ENCODE measurements at regions of chrX and their contacts with region 1.

Region 1: DNA sequence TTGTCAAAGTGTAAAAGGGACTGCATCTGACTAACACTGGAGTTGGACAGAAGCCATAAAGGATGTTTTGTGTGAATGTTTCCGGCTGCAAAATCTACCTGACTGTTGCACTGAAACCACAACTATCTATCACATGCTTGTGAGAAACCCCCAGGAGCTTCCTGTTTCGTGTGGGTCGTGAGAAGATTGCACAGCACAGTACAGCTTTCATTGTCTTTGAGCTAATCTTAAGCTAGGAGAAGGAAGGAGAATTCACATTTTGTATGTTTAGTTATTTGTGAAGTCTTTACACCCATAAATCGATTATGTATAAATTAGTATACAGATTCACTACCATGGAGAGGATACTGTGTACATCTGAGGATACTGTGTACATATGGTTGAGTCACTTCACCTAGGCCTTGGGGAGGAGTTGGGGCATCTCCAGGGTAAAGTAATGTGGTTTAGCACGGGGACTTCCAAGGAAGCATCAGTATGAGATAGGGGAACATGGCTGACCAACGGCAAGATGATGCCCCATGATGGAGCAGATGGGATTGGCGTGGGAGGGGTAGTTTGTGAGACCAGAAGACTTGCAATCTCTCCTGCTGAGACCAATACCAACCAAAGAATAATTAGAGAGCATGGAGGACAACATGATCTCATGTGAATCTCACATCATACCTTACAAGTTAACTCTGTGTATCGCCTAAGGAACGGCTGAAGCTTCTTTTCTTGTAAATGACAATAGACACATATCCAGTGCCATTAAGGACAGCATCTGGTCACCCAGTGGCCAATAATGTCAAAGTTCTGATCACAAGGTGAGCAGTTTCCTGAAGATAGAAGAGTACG is 43.1 kb upstream of the FAM9C start:
- DNase-seq: peak; percentile 89
- ATAC-seq: peak; percentile 73
- H3K4me3 ChIP-seq: peak overlapping the region in 1 of 5 experiments; percentile 44
- H3K4me3 Mint-ChIP-seq: peak overlapping the region; percentile 55
- H3K27ac ChIP-seq: peak overlapping the region; percentile 98
- H3K27ac Mint-ChIP-seq: peak overlapping the region; percentile 99
- H3K4me1 ChIP-seq: peaks cover 90 to 91% of the 10 kb centered on the region in 2 donors
- H3K4me1 Mint-ChIP-seq: peaks cover 86% of the 10 kb centered on the region
- H3K27me3 ChIP-seq: no peaks in the 10 kb centered on the region
- H3K27me3 Mint-ChIP-seq: no peaks in the 10 kb centered on the region
- CTCF ChIP-seq: no peak

Region 2: DNA sequence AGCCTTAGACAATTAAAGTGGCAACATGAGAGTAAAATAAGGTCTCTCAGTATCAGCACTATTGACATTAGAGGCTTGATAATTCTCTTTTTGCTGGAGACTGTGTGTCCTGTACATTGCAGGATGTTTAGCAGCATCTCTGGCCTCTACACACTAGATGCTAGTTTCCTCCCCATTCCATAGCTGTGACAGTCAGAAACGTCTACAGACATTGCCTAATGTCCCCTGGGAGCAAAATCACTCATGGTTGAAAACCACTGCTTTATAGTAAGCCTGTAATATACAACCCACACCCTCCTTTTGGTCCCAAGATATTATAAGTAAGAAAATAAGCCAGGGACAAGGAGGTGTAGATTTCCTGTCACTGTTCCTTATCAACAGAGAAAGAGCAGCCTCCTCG is 783.3 kb before region 1 on chrX:
- CTCF ChIA-PET with region 1: no interaction called
- POLR2A ChIA-PET with region 1: no interaction called
- intact Hi-C with region 1: no loop called
- DNase-seq: no peak
- ATAC-seq: no peak
- H3K4me3 ChIP-seq: no peak overlapping the region
- H3K4me3 Mint-ChIP-seq: no peak overlapping the region
- H3K27ac ChIP-seq: no peak overlapping the region
- H3K27ac Mint-ChIP-seq: no peak overlapping the region
- H3K4me1 ChIP-seq: peaks cover 0 to 5% of the 10 kb centered on the region in 2 donors
- H3K4me1 Mint-ChIP-seq: peaks cover 6% of the 10 kb centered on the region
- H3K27me3 ChIP-seq: no peaks in the 10 kb centered on the region
- H3K27me3 Mint-ChIP-seq: no peaks in the 10 kb centered on the region
- CTCF ChIP-seq: no peak

Region 3: GRCh38 chrX:12955882-12956703 is 131.4 kb before region 1 on chrX:
- CTCF ChIA-PET with region 1: interaction called, 173 read pairs
- POLR2A ChIA-PET with region 1: interaction called, 25 read pairs
- intact Hi-C with region 1: loop called (anchors 1 kb)
- DNase-seq: peak; percentile 78
- ATAC-seq: peak; percentile 46
- H3K4me3 ChIP-seq: peak overlapping the region; percentile 33 to 52 (median 38)
- H3K4me3 Mint-ChIP-seq: peak overlapping the region; percentile 90
- H3K27ac ChIP-seq: peak overlapping the region; percentile 95
- H3K27ac Mint-ChIP-seq: peak overlapping the region; percentile 98
- H3K4me1 ChIP-seq: peaks cover 84 to 91% of the 10 kb centered on the region in 2 donors
- H3K4me1 Mint-ChIP-seq: peaks cover 70% of the 10 kb centered on the region
- H3K27me3 ChIP-seq: no peaks in the 10 kb centered on the region
- H3K27me3 Mint-ChIP-seq: no peaks in the 10 kb centered on the region
- CTCF ChIP-seq: no peak

Region 4: DNA sequence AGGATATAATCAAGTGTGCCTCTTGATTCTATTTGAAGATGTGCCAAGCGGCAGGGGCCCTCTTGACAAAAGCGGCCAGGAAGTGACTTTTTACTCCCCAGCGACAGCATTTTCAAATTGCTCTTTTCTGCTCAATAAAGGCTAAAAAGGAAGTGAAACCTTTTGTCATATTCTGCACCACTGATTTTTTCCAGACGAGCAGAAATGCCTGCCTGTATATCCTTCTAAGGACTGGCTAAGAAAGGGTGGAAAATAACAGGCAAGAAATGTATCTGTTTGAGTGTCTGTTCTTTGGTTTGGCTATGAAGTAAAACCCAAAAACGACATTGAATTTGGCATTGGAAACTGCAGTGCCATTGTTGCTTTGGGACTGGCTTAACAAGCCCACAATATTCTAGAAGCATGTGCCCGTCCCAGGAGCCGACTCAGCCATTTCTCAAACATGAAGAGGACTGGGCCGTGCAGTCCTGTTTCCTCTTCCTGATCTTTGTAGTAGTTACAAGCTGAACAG is 87.2 kb before region 1 on chrX:
- CTCF ChIA-PET with region 1: interaction called, 21 read pairs
- POLR2A ChIA-PET with region 1: interaction called, 13 read pairs
- intact Hi-C with region 1: loop called (anchors 1 kb)
- DNase-seq: peak; percentile 79
- ATAC-seq: peak; percentile 72
- H3K4me3 ChIP-seq: peak overlapping the region in 4 of 5 experiments; percentile 3 to 40 (median 10)
- H3K4me3 Mint-ChIP-seq: peak overlapping the region; percentile 84
- H3K27ac ChIP-seq: peak overlapping the region; percentile 76 to 80
- H3K27ac Mint-ChIP-seq: peak overlapping the region; percentile 95
- H3K4me1 ChIP-seq: peaks cover 64 to 69% of the 10 kb centered on the region in 2 donors
- H3K4me1 Mint-ChIP-seq: peaks cover 64% of the 10 kb centered on the region
- H3K27me3 ChIP-seq: no peaks in the 10 kb centered on the region
- H3K27me3 Mint-ChIP-seq: no peaks in the 10 kb centered on the region
- CTCF ChIP-seq: no peak

Region 5: DNA sequence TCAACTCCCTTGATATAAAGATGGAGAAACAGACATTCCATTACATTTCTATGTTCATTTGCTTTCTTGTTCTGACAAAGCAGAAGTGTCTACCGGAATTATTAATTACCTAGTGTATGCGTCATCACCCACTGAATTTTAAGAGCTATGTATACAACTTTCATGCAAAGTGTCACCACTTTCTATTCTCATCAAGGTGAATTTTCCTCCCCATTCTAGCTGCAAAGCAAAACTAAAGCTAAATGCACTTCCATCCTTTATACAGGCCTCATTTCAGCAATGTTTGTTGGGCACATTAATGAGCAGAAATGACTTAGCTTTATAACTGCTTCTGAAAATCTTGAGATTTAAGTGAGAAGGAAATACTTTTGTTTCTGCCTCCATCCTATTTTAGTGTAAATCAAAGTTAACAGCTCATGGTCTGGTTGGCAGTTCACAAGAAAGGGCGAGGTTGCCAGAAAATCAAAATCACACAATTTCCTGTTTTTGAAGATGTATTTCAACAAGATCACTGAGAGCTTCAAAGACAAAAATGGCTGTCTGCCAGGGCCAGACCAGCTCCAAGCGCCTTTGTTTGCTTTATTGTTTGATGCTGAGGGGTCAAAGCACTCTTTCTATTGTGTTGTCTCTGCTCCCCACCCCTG is 35.9 kb before region 1 on chrX:
- CTCF ChIA-PET with region 1: interaction called, 8 read pairs
- POLR2A ChIA-PET with region 1: interaction called, 5 read pairs
- intact Hi-C with region 1: loop called (anchors 5 kb)
- DNase-seq: peak; percentile 69
- ATAC-seq: peak; percentile 76
- H3K4me3 ChIP-seq: no peak overlapping the region
- H3K4me3 Mint-ChIP-seq: peak overlapping the region; percentile 45
- H3K27ac ChIP-seq: peak overlapping the region; percentile 79 to 85
- H3K27ac Mint-ChIP-seq: peak overlapping the region; percentile 93
- H3K4me1 ChIP-seq: peaks cover 35 to 42% of the 10 kb centered on the region in 2 donors
- H3K4me1 Mint-ChIP-seq: peaks cover 51% of the 10 kb centered on the region
- H3K27me3 ChIP-seq: no peaks in the 10 kb centered on the region
- H3K27me3 Mint-ChIP-seq: no peaks in the 10 kb centered on the region
- CTCF ChIP-seq: no peak

Region 6: GRCh38 chrX:13263560-13264251 is 176.2 kb after region 1 on chrX:
- CTCF ChIA-PET with region 1: no interaction called
- POLR2A ChIA-PET with region 1: no interaction called
- intact Hi-C with region 1: loop called (anchors 5 kb)
- DNase-seq: peak; percentile 58
- ATAC-seq: peak; percentile 88
- H3K4me3 ChIP-seq: peak overlapping the region in 1 of 5 experiments; percentile 12
- H3K4me3 Mint-ChIP-seq: peak overlapping the region; percentile 66
- H3K27ac ChIP-seq: peak overlapping the region; percentile 56 to 72
- H3K27ac Mint-ChIP-seq: no peak overlapping the region
- H3K4me1 ChIP-seq: peaks cover 23 to 27% of the 10 kb centered on the region in 2 donors
- H3K4me1 Mint-ChIP-seq: peaks cover 18% of the 10 kb centered on the region
- H3K27me3 ChIP-seq: no peaks in the 10 kb centered on the region
- H3K27me3 Mint-ChIP-seq: no peaks in the 10 kb centered on the region
- CTCF ChIP-seq: no peak

Region 7: GRCh38 chrX:13418126-13419097 is 330.9 kb after region 1 on chrX:
- CTCF ChIA-PET with region 1: no interaction called
- POLR2A ChIA-PET with region 1: no interaction called
- intact Hi-C with region 1: loop called (anchors 5 kb)
- DNase-seq: no peak
- ATAC-seq: no peak
- H3K4me3 ChIP-seq: no peak overlapping the region
- H3K4me3 Mint-ChIP-seq: peak overlapping the region; percentile 87
- H3K27ac ChIP-seq: peak overlapping the region; percentile 72 to 77
- H3K27ac Mint-ChIP-seq: peak overlapping the region; percentile 95
- H3K4me1 ChIP-seq: peaks cover 50 to 59% of the 10 kb centered on the region in 2 donors
- H3K4me1 Mint-ChIP-seq: peaks cover 73% of the 10 kb centered on the region
- H3K27me3 ChIP-seq: no peaks in the 10 kb centered on the region
- H3K27me3 Mint-ChIP-seq: no peaks in the 10 kb centered on the region
- CTCF ChIP-seq: no peak